ENCODE measurements at regions of chr19 and their contacts with region 1.

Region 1: DNA sequence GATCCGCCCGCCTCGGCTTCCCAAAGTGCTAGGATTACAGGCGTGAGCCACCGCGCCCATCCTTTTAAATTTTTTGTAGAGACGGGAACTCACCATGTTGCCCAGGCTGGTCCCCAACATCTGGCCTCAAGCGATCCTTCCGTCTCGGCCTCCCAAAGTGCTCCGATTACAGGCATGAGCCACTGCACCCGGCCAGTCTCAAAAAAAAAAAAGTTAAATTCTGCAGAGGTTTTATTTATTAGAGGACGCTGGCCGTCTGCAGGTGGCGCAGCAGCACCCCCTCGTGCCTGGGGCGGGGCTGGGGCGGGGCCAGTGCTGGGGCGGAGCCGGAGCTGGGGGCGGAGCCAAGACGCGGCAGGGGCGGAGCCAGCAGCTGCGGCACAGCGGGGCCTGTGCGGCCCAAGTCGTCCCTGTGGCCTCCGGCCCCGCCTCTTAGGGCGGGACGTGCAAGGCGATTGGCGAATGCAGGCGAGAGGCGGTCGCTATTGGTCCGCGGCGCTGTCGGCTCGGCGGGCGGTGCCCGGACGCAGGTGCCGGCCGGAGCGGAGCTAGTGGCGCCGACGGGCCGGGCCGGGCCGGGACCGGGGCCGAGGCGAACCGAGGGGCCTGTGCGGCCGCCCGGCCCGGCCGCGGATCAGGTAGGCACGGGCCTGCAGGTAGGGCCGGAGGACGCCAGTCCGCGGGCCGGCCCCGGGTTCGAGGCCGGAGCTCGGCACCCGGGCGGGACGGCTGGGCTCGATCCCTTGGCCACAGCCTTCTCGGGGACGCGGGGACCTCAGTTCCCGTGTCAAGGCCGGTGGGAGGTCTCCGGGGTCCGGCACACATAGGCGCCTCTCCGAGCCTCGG is at the start of gene MARCHF2:
- DNase-seq: peak; percentile 96
- H3K4me3 Mint-ChIP-seq: peak within 1 kb of the TSS; percentile 41
- H3K27ac Mint-ChIP-seq: no peak within 1 kb of the TSS
- H3K4me1 Mint-ChIP-seq: no peaks in the 10 kb centered on the region
- H3K27me3 Mint-ChIP-seq: no peaks in the 10 kb centered on the region
- CTCF ChIP-seq: peak; percentile 61
- total RNA-seq, gene MARCHF2: 8.3 and 11.5 TPM in 2 replicates

Region 2: DNA sequence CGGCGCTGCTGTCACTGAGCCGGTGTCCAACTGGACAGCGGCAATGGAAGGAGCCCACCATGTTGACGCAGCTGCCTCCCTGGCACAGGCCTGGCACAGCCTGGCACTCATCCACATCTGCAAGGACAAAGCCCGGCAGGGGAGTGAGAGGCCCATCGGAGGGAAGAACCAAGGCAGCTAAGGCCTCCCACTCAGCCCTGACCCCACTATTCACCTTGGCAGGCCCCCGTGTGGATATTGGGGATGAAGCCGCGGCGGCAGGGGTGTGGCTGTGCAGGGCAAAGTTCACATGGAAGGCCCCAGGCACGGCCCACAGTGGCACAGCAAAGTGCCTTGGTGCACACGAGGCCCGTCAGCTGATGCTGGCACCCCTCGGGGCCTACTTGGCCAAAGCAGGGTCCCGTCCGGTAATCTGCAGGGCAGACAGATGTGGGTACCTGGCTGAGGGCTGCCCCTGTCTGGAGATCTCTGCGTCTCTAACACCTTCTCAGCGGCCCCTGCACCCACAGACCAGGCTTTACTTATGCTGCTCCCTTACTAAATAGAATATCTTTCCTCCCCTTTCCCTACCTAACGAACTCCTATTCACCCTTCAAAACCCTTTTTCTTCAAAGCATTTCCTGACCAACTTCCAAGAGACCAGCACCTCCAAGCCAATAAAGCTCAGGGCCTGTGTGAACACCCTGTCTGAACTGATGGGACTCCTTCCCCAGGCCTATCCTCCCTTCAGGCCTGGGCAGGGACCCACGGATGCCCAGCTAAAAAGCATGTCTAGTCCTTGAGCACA is 271.1 kb before region 1 on chr19:
- CTCF ChIA-PET with region 1: no interaction called
- POLR2A ChIA-PET with region 1: no interaction called
- intact Hi-C with region 1: no loop called
- DNase-seq: no peak
- H3K4me3 Mint-ChIP-seq: no peak overlapping the region
- H3K27ac Mint-ChIP-seq: no peak overlapping the region
- H3K4me1 Mint-ChIP-seq: no peaks in the 10 kb centered on the region
- H3K27me3 Mint-ChIP-seq: peaks cover 12% of the 10 kb centered on the region
- CTCF ChIP-seq: no peak

Region 3: GRCh38 chr19:8423817-8424223 is 10.8 kb after region 1 on chr19:
- CTCF ChIA-PET with region 1: interaction called, 15 read pairs
- POLR2A ChIA-PET with region 1: interaction called, 8 read pairs
- intact Hi-C with region 1: no loop called
- DNase-seq: peak; percentile 99
- H3K4me3 Mint-ChIP-seq: no peak overlapping the region
- H3K27ac Mint-ChIP-seq: peak overlapping the region; percentile 57
- H3K4me1 Mint-ChIP-seq: no peaks in the 10 kb centered on the region
- H3K27me3 Mint-ChIP-seq: no peaks in the 10 kb centered on the region
- CTCF ChIP-seq: no peak

Region 4: DNA sequence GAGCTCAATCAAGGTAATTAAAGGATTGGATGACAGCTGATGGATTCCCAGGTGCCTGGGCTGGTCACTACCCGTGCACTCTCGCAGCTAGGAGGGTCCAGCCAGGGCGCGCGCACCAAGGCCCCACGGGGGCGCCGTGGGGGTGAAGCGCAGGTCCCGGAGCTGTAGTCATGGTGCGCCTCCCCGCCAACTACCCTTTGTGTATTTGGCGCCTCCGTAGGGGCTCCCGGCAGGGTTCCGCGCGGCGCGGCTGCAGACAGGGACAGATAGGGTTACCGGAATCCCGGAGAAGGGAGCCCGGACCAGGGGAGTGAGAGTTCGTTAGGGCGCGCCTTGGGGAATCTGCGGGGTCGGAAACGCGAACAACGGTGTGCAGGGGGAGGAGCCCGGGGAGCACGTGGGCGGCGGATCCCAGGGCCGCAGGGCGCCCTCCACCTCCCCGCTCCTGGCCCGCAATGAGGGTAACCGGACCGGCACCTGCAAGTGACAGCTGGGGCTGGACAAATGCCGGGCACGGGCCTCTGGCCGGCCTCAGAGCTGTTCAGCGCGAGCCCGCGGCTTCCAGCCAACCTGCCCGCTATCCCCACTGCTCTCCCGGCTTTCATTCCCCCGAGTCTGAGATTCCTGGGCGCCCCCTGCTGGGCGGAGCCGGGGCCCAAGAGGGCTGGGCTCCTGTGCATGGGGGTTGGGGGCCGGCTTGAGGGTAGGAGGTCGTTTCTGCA is 92.8 kb after region 1 on chr19:
- CTCF ChIA-PET with region 1: interaction called, 5 read pairs
- POLR2A ChIA-PET with region 1: interaction called, 4 read pairs
- intact Hi-C with region 1: loop called (anchors 2 kb)
- DNase-seq: peak; percentile 78
- H3K4me3 Mint-ChIP-seq: peak overlapping the region; percentile 86
- H3K27ac Mint-ChIP-seq: no peak overlapping the region
- H3K4me1 Mint-ChIP-seq: peaks cover 5% of the 10 kb centered on the region
- H3K27me3 Mint-ChIP-seq: no peaks in the 10 kb centered on the region
- CTCF ChIP-seq: peak; percentile 83

Region 5: DNA sequence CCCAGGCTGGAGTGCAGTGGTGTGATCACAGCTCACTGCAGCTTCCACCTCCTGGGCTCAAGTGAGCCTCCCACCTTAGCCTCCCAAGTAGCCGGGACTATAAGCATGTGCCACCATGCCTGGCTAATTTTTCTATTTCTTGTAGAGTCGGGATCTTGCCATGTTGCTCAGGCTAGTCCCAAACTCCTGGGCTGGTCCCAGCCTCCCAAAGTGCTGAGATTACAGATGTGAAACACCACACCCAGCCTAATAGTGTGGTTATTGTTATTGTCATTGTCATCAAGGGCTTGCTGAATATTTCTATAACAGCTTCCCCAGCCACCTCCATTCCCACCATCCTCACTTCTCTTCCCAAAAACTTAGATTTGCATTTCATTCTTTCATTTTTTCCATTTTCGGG is 311.3 kb after region 1 on chr19:
- CTCF ChIA-PET with region 1: no interaction called
- POLR2A ChIA-PET with region 1: no interaction called
- intact Hi-C with region 1: no loop called
- DNase-seq: no peak
- H3K4me3 Mint-ChIP-seq: no peak overlapping the region
- H3K27ac Mint-ChIP-seq: no peak overlapping the region
- H3K4me1 Mint-ChIP-seq: no peaks in the 10 kb centered on the region
- H3K27me3 Mint-ChIP-seq: no peaks in the 10 kb centered on the region
- CTCF ChIP-seq: no peak

Region 6: GRCh38 chr19:8897106-8897505 is 484.1 kb after region 1 on chr19:
- CTCF ChIA-PET with region 1: no interaction called
- POLR2A ChIA-PET with region 1: no interaction called
- intact Hi-C with region 1: no loop called
- DNase-seq: no peak
- H3K4me3 Mint-ChIP-seq: no peak overlapping the region
- H3K27ac Mint-ChIP-seq: no peak overlapping the region
- H3K4me1 Mint-ChIP-seq: no peaks in the 10 kb centered on the region
- H3K27me3 Mint-ChIP-seq: no peaks in the 10 kb centered on the region
- CTCF ChIP-seq: no peak